ENCODE measurements at regions of chr7 and their contacts with region 1.

Region 1: DNA sequence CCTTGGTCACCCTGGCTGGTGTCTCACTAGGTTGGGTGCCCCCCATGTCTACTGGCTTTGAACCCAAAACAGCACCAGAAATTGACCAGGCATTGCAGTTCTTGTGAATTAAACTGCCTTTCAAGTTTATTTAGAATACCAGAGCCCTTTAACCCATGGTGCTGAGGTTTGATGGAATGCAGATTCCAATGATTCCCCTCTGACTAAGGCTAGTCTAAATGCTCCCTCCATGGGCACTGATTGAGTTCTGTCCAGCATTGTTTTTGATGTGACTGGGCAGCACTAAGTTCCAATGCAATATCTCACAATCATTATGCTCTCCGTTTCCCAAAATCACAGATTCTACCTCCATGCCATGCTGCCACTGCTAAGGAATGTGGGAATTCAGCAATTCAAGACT is 1047.4 kb upstream of the LRRN3 start:
- DNase-seq: no peak
- ATAC-seq: no peak
- H3K4me3 ChIP-seq: no peak overlapping the region
- H3K4me3 Mint-ChIP-seq: no peak overlapping the region
- H3K27ac ChIP-seq: no peak overlapping the region
- H3K27ac Mint-ChIP-seq: no peak overlapping the region
- H3K4me1 ChIP-seq: no peaks in the 10 kb centered on the region
- H3K4me1 Mint-ChIP-seq: no peaks in the 10 kb centered on the region
- H3K27me3 ChIP-seq: no peaks in the 10 kb centered on the region
- H3K27me3 Mint-ChIP-seq: no peaks in the 10 kb centered on the region
- CTCF ChIP-seq: no peak

Region 2: GRCh38 chr7:110065121-110065520 is 21.6 kb after region 1 on chr7:
- CTCF ChIA-PET with region 1: no interaction called
- POLR2A ChIA-PET with region 1: no interaction called
- intact Hi-C with region 1: no loop called
- DNase-seq: no peak
- ATAC-seq: no peak
- H3K4me3 ChIP-seq: no peak overlapping the region
- H3K4me3 Mint-ChIP-seq: no peak overlapping the region
- H3K27ac ChIP-seq: no peak overlapping the region
- H3K27ac Mint-ChIP-seq: no peak overlapping the region
- H3K4me1 ChIP-seq: no peaks in the 10 kb centered on the region
- H3K4me1 Mint-ChIP-seq: no peaks in the 10 kb centered on the region
- H3K27me3 ChIP-seq: no peaks in the 10 kb centered on the region
- H3K27me3 Mint-ChIP-seq: no peaks in the 10 kb centered on the region
- CTCF ChIP-seq: no peak

Region 3: DNA sequence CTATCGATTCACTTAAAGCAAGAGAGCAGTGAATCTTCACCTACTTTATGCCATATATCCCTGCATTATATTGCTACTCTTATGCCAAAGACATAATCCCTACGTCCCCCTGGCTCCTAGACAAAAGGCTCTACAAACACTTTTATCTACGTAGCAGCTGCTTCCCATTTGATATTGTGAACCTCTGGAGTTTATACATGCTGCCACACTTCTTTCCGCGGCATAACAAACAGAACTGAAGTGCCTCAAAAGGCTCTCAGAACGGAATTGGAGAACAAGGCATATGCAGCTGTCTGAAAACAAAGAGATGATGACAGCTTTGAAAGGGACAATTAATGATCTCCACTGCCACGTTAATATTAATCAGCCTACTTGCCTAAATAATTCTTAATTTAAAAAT is 61.8 kb after region 1 on chr7:
- CTCF ChIA-PET with region 1: no interaction called
- POLR2A ChIA-PET with region 1: no interaction called
- intact Hi-C with region 1: loop called in 1 of 2 experiments (anchors 2 kb)
- DNase-seq: no peak
- ATAC-seq: no peak
- H3K4me3 ChIP-seq: no peak overlapping the region
- H3K4me3 Mint-ChIP-seq: no peak overlapping the region
- H3K27ac ChIP-seq: no peak overlapping the region
- H3K27ac Mint-ChIP-seq: no peak overlapping the region
- H3K4me1 ChIP-seq: no peaks in the 10 kb centered on the region
- H3K4me1 Mint-ChIP-seq: no peaks in the 10 kb centered on the region
- H3K27me3 ChIP-seq: no peaks in the 10 kb centered on the region
- H3K27me3 Mint-ChIP-seq: no peaks in the 10 kb centered on the region
- CTCF ChIP-seq: no peak

Measured in CD8-positive, alpha-beta T cell (primary cell).